HCT116 (cell line): ENCODE measurements at regions of chr5 and their contacts with region 1.

Region 1: GRCh38 chr5:175809531-175810121 is 61.8 kb upstream of the CPLX2 start:
- DNase-seq: peak; percentile 37
- ATAC-seq: peak; percentile 84
- H3K4me3 ChIP-seq: peak overlapping the region; percentile 8 to 46
- H3K27ac ChIP-seq: no peak overlapping the region
- H3K4me1 ChIP-seq: peaks cover 24 to 37% of the 10 kb centered on the region in 2 experiments
- H3K27me3 ChIP-seq: no peaks in the 10 kb centered on the region
- CTCF ChIP-seq: no peak
- POLR2A ChIP-seq: no peak
- RAD21 ChIP-seq: no peak

Region 2: DNA sequence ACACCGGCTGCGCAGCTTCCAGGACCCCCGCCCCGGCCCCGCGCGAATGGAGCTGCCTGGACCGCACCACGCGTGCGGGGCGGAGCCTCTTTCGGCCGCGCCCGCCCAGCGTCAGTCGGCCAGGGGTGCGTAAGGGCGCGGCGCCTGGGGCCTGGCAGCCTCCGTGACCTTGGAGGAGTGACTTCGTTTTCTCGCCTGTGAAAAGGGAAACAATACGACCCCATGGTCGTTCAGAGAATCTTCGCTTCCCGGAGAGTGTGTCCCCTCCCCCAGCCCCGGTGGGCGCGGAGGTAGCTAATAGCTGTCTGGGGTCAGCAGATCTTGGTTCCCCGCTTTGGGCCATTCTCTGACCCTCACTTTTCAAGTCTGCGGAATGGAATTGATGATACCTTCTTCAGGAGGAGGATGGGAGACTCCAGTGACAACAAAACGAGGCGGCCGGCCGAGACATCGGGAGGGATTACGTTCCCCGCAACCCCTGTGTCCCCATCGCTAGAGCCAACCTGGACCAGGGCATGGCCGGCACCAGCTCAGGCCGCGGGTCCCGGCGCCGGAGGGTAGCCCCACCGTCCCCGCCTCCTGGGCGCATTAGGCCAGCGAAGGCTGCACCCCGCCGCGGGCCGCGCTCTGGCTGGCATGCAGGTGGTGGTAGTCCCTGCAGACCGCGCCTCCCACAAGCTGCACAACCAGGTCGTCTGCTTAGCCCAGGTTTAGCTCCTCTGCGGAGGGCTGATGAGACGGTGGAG is 734.0 kb after region 1 on chr5:
- CTCF ChIA-PET with region 1: no interaction called
- POLR2A ChIA-PET with region 1: no interaction called
- RAD21 ChIA-PET with region 1: no interaction called
- intact Hi-C with region 1: loop called (anchors 5 kb)
- DNase-seq: no peak
- ATAC-seq: peak; percentile 85
- H3K4me3 ChIP-seq: peak overlapping the region; percentile 65 to 89
- H3K27ac ChIP-seq: peak overlapping the region; percentile 92
- H3K4me1 ChIP-seq: peaks cover 34 to 64% of the 10 kb centered on the region in 2 experiments
- H3K27me3 ChIP-seq: no peaks in the 10 kb centered on the region
- CTCF ChIP-seq: no peak
- POLR2A ChIP-seq: peak; percentile 66
- RAD21 ChIP-seq: no peak